ENCODE measurements at regions of chr16 and their contacts with region 1.

Region 1: DNA sequence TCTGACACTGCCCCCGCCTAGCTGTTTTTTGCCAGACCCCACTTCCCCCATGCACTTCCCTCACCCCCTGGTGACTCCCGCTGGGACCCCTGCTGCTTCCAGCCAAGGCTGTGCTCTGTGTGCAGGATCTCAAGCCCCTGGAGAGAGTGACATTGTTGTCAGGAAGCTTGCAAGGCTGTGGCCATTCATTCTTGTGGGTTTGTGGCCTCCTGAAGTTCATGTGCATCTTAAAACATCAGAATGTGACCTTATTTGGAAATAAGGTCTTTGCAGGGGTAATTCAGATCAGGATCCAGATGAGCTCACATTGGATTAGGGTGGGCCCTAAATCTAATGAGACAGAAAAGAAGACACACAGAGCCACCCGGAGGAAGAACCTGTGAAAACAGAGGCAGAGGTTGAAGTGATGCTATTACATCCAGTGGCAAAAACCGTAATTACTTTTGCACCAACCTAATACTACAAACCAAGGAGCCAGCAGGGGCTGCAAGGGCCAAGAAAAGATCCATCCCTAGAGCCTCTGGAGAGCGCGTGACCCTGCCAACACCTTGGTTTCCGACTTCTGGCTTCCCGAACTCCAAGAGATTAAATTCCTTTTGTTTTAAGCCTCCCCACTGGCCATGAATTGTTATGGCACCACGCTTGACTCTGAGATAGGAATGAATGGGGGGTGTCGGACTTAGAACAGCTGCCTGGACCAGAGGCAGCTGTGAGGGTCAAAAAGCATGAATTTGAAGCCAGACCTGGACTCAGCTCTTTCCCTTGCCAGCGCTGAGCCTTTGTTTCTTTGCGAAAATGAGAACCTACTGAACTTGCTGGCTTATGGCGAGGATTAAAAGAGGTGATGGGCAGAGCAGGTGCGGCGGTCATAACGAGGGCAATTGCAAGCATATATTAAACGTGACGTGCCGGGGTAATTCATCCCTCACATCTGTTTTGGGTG is 75.5 kb downstream of the BMERB1 start:
- DNase-seq: no peak
- ATAC-seq: no peak
- H3K4me3 ChIP-seq: no peak overlapping the region
- H3K27ac ChIP-seq: no peak overlapping the region
- H3K4me1 ChIP-seq: peaks cover 23% of the 10 kb centered on the region
- H3K27me3 ChIP-seq: no peaks in the 10 kb centered on the region
- CTCF ChIP-seq: no peak

Region 2: GRCh38 chr16:15597822-15598647 is 88.2 kb after region 1 on chr16:
- CTCF ChIA-PET with region 1: no interaction called
- POLR2A ChIA-PET with region 1: no interaction called
- in situ Hi-C with region 1: loop called (anchors 5 kb)
- intact Hi-C with region 1: no loop called
- DNase-seq: no peak
- ATAC-seq: peak; percentile 37; the same call in 1 of the 2 replicates
- H3K4me3 ChIP-seq: no peak overlapping the region
- H3K27ac ChIP-seq: peak overlapping the region; percentile 36; the same call in 1 of the 2 replicates
- H3K4me1 ChIP-seq: peaks cover 10% of the 10 kb centered on the region; the same call in 1 of the 2 replicates
- H3K27me3 ChIP-seq: no peaks in the 10 kb centered on the region
- CTCF ChIP-seq: no peak